ENCODE measurements at regions of chr12 and their contacts with region 1.

Region 1: DNA sequence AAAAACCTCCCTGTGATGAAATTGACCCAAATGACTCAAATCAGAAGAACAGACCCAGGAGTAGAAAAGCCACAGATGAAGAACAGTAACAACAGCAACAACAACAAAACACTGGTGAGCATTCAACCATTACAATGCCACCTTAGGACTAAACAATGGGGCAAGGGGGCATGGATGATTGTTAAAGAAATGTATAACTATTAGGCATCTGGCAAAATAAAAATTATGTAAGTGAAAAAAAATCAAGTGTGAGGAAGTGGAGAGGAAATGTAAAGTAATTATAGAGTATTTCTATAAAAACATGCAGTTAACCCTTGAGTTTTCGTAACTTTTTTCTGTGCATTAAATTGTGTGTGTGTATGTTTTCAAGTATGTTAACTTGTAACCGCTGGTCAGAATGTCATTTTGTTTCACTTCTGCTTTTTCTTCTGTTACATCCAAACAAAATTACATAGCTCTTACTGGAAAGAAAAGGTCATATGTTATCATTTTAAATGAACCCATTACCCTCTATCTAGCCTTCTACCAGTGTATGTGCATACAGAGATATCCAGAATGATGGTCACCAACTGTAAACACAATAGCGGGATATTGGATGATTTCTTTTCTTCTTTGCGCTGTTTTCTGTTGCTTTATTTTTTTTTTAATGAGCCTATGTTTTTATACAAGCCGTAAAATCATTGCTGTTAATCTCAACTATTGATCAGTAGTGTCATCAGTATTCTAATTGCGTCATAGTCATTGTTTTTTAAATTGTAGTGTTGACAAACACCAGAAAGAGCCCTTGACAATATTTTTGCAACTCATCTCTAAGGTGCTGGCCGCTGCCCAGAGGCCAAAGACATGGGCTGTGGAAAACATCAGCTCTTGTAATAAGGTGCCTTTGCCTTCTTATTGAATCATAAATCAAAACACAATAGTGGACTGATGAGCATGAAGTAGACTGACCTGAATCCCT is 170.6 kb downstream of the CRADD start:
- DNase-seq: no peak
- ATAC-seq: peak; percentile 40
- H3K4me3 ChIP-seq: no peak overlapping the region
- H3K4me3 Mint-ChIP-seq: peak overlapping the region in 2 of 10 donors; percentile 59 to 68
- H3K27ac ChIP-seq: no peak overlapping the region
- H3K27ac Mint-ChIP-seq: peak overlapping the region in 3 of 9 donors; percentile 31 to 85 (median 46)
- H3K4me1 ChIP-seq: peaks cover 0 to 13% of the 10 kb centered on the region in 2 donors
- H3K4me1 Mint-ChIP-seq: peaks cover 12 to 61% (median 23%) of the 10 kb centered on the region in 7 donors
- H3K27me3 ChIP-seq: no peaks in the 10 kb centered on the region
- H3K27me3 Mint-ChIP-seq: no peaks in the 10 kb centered on the region

Region 2: GRCh38 chr12:93766796-93767523 is 80.8 kb before region 1 on chr12:
- CTCF ChIA-PET with region 1: no interaction called
- POLR2A ChIA-PET with region 1: no interaction called
- intact Hi-C with region 1: loop called in 1 of 2 experiments (anchors 5 kb)
- DNase-seq: peak in 6 of 9 donors; percentile 23 to 58 (median 28)
- ATAC-seq: peak; percentile 84
- H3K4me3 ChIP-seq: no peak overlapping the region
- H3K4me3 Mint-ChIP-seq: peak overlapping the region in 5 of 10 donors; percentile 0 to 53 (median 6)
- H3K27ac ChIP-seq: no peak overlapping the region
- H3K27ac Mint-ChIP-seq: peak overlapping the region in 7 of 9 donors; percentile 6 to 74 (median 27)
- H3K4me1 ChIP-seq: no peaks in the 10 kb centered on the region
- H3K4me1 Mint-ChIP-seq: peaks cover 11 to 53% (median 17%) of the 10 kb centered on the region in 7 donors
- H3K27me3 ChIP-seq: no peaks in the 10 kb centered on the region
- H3K27me3 Mint-ChIP-seq: no peaks in the 10 kb centered on the region

Region 3: GRCh38 chr12:93785262-93786010 is 62.4 kb before region 1 on chr12:
- CTCF ChIA-PET with region 1: no interaction called
- POLR2A ChIA-PET with region 1: no interaction called
- intact Hi-C with region 1: loop called in 1 of 2 experiments (anchors 1 kb)
- DNase-seq: peak in 2 of 9 donors; percentile 29 to 48
- ATAC-seq: peak; percentile 77
- H3K4me3 ChIP-seq: no peak overlapping the region
- H3K4me3 Mint-ChIP-seq: peak overlapping the region in 4 of 10 donors; percentile 2 to 87 (median 36)
- H3K27ac ChIP-seq: no peak overlapping the region
- H3K27ac Mint-ChIP-seq: peak overlapping the region in 7 of 9 donors; percentile 35 to 81 (median 58)
- H3K4me1 ChIP-seq: peaks cover 9 to 26% of the 10 kb centered on the region in 2 donors
- H3K4me1 Mint-ChIP-seq: peaks cover 26 to 64% (median 61%) of the 10 kb centered on the region in 7 donors
- H3K27me3 ChIP-seq: no peaks in the 10 kb centered on the region
- H3K27me3 Mint-ChIP-seq: no peaks in the 10 kb centered on the region